ENCODE measurements at regions of chr18 and their contacts with region 1.

Region 1: DNA sequence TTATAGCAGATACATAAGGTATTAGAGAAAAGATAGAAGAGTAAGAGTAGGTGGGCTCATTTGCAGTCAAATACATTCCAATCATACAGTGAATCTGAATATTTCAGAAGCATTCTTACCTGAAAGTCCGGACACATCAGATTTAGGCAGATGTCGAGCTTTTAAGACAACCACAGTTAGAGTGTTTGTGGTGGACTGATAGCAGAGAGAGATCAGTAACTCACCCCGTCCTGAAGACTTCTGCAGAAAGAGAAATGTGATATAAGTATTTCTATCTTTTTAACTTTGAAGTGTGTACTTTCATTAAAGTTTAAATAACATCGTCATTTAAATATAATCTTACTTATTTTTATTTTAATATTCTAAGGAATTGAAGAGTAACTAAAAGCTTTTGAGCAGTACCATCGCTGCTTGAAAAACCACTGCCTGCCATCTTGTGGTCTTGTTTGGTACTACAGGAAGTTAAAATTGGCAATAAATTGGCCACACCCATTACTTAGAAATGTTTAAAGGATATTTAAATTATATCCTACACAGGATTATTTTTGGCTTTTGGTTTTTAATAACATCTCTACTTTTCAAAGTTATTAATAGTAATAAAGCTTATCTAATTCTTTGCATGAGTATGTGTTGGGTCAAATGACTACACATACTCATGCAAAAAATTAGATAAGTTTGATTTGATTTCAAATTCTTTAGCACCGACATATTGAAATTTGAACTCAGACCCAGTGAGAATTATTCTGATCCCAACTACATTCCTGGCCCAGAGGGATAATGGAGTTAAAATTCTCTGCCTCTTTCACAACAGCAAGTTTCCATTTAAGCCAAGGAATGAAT is 5.5 kb downstream of the SYT4 start:
- DNase-seq: peak in 5 of 9 donors; percentile 2 to 16 (median 5)
- ATAC-seq: peak; percentile 46
- H3K4me3 ChIP-seq: no peak overlapping the region
- H3K4me3 Mint-ChIP-seq: no peak overlapping the region
- H3K27ac ChIP-seq: no peak overlapping the region
- H3K27ac Mint-ChIP-seq: no peak overlapping the region
- H3K4me1 ChIP-seq: no peaks in the 10 kb centered on the region
- H3K4me1 Mint-ChIP-seq: peaks cover 0 to 4% (median 0%) of the 10 kb centered on the region in 7 donors
- H3K27me3 ChIP-seq: no peaks in the 10 kb centered on the region
- H3K27me3 Mint-ChIP-seq: peaks cover 0 to 15% (median 6%) of the 10 kb centered on the region in 5 donors

Region 2: DNA sequence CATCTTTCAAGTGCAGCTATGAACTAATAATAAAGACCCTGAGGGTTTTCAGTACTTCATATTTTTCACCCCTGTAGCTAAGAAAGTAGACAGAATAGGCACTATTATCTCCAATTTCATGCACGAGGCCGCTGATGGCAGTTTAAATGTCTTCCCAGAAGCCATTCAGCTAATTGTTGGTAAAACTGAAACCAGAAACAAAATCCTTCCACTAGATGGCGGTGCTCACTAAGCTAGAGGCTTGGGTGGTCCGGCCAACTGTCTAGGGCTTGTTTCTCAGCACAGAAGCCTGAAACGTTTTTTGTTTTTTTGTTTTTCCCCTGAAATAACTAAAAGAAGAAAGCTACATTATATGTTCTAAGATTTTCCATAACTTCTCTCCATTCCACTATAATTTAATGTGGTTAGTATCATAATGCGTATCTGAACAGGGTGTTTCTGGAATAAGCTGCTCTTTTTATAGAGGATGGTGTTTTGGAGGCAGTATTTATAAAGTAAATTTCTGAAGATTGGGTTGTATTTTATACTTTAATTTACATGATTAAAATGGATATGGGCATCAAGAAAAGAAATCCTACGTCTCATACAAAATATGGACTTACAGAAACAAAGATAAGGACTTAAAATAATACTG is 1157.4 kb before region 1 on chr18:
- CTCF ChIA-PET with region 1: interaction called, 13 read pairs
- POLR2A ChIA-PET with region 1: no interaction called
- intact Hi-C with region 1: loop called in 1 of 2 experiments (anchors 1 kb)
- DNase-seq: peak; percentile 7 to 57 (median 49)
- ATAC-seq: peak; percentile 79
- H3K4me3 ChIP-seq: no peak overlapping the region
- H3K4me3 Mint-ChIP-seq: peak overlapping the region in 6 of 10 donors; percentile 23 to 46 (median 44)
- H3K27ac ChIP-seq: no peak overlapping the region
- H3K27ac Mint-ChIP-seq: peak overlapping the region in 2 of 9 donors; percentile 15 to 43
- H3K4me1 ChIP-seq: peaks cover 0 to 4% of the 10 kb centered on the region in 2 donors
- H3K4me1 Mint-ChIP-seq: peaks cover 0 to 13% (median 12%) of the 10 kb centered on the region in 7 donors
- H3K27me3 ChIP-seq: no peaks in the 10 kb centered on the region
- H3K27me3 Mint-ChIP-seq: peaks cover 0 to 20% (median 0%) of the 10 kb centered on the region in 5 donors

Region 3: GRCh38 chr18:42131066-42131929 is 1140.5 kb before region 1 on chr18:
- CTCF ChIA-PET with region 1: no interaction called
- POLR2A ChIA-PET with region 1: no interaction called
- intact Hi-C with region 1: loop called in 1 of 2 experiments (anchors 5 kb)
- DNase-seq: no peak
- ATAC-seq: no peak
- H3K4me3 ChIP-seq: no peak overlapping the region
- H3K4me3 Mint-ChIP-seq: no peak overlapping the region
- H3K27ac ChIP-seq: no peak overlapping the region
- H3K27ac Mint-ChIP-seq: no peak overlapping the region
- H3K4me1 ChIP-seq: no peaks in the 10 kb centered on the region
- H3K4me1 Mint-ChIP-seq: no peaks in the 10 kb centered on the region
- H3K27me3 ChIP-seq: no peaks in the 10 kb centered on the region
- H3K27me3 Mint-ChIP-seq: peaks cover 0 to 8% (median 4%) of the 10 kb centered on the region in 5 donors

Region 4: DNA sequence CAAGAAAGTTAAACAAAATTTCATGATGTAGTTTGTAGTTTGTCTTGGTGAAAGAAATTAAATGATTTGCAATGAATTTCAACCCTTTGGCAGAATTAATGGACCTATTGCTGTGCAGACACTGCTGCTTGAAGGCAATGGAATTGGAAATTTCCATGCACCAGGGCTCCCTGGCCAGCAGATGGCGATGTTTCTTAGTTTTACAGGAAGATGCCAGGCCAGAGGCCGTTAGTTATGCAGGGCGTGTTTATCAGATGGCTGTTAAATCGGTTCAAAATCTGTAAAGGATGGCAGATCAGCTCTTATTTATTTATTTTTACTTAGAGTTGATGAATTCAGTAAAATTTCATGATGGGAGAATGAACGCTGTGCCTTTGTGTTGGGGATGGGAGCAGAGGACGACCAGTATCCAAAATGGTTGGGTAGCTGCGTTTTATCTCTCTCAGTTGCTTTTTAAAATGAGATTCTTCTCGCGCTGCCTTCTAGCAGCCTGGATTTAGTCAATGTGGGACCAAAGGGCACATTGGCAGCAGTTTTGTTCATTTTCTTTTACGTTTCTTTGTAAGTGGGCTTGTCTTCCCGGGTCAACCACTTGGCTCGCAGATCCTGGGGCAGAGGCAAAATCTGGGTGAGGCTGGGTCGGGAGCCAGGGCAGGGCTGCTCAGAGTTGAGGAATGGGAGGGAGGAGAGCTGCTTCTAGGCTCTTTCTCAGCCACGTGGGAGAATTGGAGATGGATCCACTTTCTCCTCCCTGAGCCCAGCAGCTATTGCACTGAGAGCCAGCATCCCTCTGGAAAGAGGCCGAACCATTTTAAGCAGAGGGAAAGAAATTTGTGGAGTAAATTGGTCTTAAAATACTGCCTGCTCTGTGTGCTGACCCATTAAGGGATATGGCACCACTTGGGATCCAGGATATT is 972.8 kb before region 1 on chr18:
- CTCF ChIA-PET with region 1: no interaction called
- POLR2A ChIA-PET with region 1: no interaction called
- intact Hi-C with region 1: loop called in 1 of 2 experiments (anchors 2 kb)
- DNase-seq: peak in 8 of 9 donors; percentile 1 to 49 (median 36)
- ATAC-seq: peak; percentile 63
- H3K4me3 ChIP-seq: no peak overlapping the region
- H3K4me3 Mint-ChIP-seq: no peak overlapping the region
- H3K27ac ChIP-seq: no peak overlapping the region
- H3K27ac Mint-ChIP-seq: no peak overlapping the region
- H3K4me1 ChIP-seq: no peaks in the 10 kb centered on the region
- H3K4me1 Mint-ChIP-seq: peaks cover 0 to 4% (median 0%) of the 10 kb centered on the region in 7 donors
- H3K27me3 ChIP-seq: no peaks in the 10 kb centered on the region
- H3K27me3 Mint-ChIP-seq: peaks cover 0 to 5% (median 2%) of the 10 kb centered on the region in 5 donors

Region 5: GRCh38 chr18:43211059-43211458 is 60.8 kb before region 1 on chr18:
- CTCF ChIA-PET with region 1: no interaction called
- POLR2A ChIA-PET with region 1: no interaction called
- intact Hi-C with region 1: loop called in 1 of 2 experiments (anchors 10 kb)
- DNase-seq: no peak
- ATAC-seq: no peak
- H3K4me3 ChIP-seq: no peak overlapping the region
- H3K4me3 Mint-ChIP-seq: no peak overlapping the region
- H3K27ac ChIP-seq: no peak overlapping the region
- H3K27ac Mint-ChIP-seq: no peak overlapping the region
- H3K4me1 ChIP-seq: no peaks in the 10 kb centered on the region
- H3K4me1 Mint-ChIP-seq: no peaks in the 10 kb centered on the region
- H3K27me3 ChIP-seq: no peaks in the 10 kb centered on the region
- H3K27me3 Mint-ChIP-seq: no peaks in the 10 kb centered on the region